Left cardiac atrium (tissue), 4 donors: ENCODE measurements at regions of chr14 and their contacts with region 1.

Region 1: GRCh38 chr14:105045710-105046326 is 19.4 kb downstream of the GPR132 start:
- DNase-seq: peak; percentile 91
- ATAC-seq: peak; percentile 89 to 96

Region 2: GRCh38 chr14:103483600-103483999 is 1562.2 kb before region 1 on chr14:
- intact Hi-C with region 1: no loop called
- DNase-seq: no peak
- ATAC-seq: peak in 1 of 2 donors; percentile 62

Region 3: GRCh38 chr14:104895786-104896661 is 149.8 kb before region 1 on chr14:
- intact Hi-C with region 1: loop called in 1 of 2 experiments (anchors 5 kb)
- DNase-seq: peak; percentile 54
- ATAC-seq: peak; percentile 8 to 28